Mammary epithelial cell (primary cell): ENCODE measurements at regions of chr5 and their contacts with region 1.

Region 1: GRCh38 chr5:94908889-94909480 is 290.5 kb downstream of the SLF1 start:
- DNase-seq: peak; percentile 18
- H3K4me3 ChIP-seq: no peak overlapping the region
- H3K27ac ChIP-seq: no peak overlapping the region
- H3K4me1 ChIP-seq: no peaks in the 10 kb centered on the region
- H3K27me3 ChIP-seq: no peaks in the 10 kb centered on the region
- CTCF ChIP-seq: peak; percentile 69 to 72

Region 2: DNA sequence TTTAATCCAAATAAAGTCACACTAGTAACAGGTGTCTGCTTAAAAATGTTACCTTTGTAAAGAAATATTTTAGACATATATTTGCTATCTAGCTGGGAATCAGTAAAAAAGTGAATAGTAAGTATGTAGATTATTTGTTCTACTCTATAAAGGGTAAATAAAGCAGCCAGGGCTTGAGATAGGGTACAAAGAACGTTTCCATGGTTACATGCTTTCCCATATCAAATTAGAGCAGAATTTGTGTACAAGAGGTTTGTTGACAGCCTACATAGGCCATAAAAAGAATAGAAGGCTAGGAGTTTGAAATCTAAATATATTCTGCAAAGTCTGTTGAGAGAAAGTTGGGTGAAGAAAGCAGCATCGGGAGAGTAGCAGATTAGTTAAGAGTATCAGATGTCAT is 1006.7 kb before region 1 on chr5:
- CTCF ChIA-PET with region 1: no interaction called
- dilution Hi-C with region 1: no loop called
- in situ Hi-C with region 1: no loop called
- intact Hi-C with region 1: loop called (anchors 5 kb)
- DNase-seq: no peak
- H3K4me3 ChIP-seq: no peak overlapping the region
- H3K27ac ChIP-seq: no peak overlapping the region
- H3K4me1 ChIP-seq: no peaks in the 10 kb centered on the region
- H3K27me3 ChIP-seq: no peaks in the 10 kb centered on the region
- CTCF ChIP-seq: no peak

Region 3: DNA sequence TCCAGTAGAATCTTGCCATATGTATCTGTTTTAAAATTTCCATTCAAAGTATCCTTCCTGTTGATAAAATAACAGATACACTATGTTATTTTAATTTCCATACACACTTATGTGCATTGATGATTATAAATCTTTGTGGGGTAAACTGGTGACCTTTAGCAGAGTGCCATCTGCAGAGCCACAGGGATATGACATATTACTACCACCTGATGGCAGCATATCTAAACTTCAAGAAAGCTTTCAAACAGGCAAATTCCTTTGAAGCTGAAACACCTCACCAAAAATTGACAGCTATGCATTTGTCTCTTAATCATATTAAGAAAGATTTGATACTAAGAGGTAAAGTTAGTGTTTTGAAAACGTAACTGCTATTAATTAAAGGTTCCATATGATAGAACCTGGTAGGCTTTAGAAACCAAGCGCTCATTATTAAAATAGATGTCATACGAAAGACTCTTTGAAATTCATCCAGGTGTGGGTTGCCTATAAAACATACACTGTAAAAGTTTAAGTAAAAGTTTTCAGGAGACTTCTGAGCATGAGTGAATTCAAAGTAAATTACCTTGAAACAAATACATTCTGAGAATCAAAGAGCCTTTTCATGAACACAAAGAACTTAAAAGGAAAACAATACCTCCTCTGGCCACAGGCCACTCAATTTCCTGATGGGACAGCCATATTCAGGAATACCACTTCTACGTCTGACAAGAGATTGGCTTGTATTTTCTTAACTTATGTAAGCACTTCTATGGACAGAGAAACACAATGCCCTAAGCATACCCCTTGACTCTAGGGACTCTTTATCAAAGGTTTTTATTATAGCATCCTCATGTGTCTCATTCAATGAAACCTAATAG is 383.9 kb before region 1 on chr5:
- CTCF ChIA-PET with region 1: no interaction called
- dilution Hi-C with region 1: no loop called
- in situ Hi-C with region 1: no loop called
- intact Hi-C with region 1: loop called (anchors 2 kb)
- DNase-seq: peak; percentile 21
- H3K4me3 ChIP-seq: no peak overlapping the region
- H3K27ac ChIP-seq: no peak overlapping the region
- H3K4me1 ChIP-seq: no peaks in the 10 kb centered on the region
- H3K27me3 ChIP-seq: no peaks in the 10 kb centered on the region
- CTCF ChIP-seq: peak; percentile 51 to 70

Region 4: GRCh38 chr5:94618493-94619328 is 290.3 kb before region 1 on chr5 and contains the starts of genes KIAA0825 and SLF1:
- CTCF ChIA-PET with region 1: no interaction called
- dilution Hi-C with region 1: no loop called
- in situ Hi-C with region 1: no loop called
- intact Hi-C with region 1: loop called (anchors 10 kb)
- DNase-seq: peak; percentile 90
- H3K4me3 ChIP-seq: peak within 1 kb of the TSS; percentile 59 to 94 (median 59)
- H3K27ac ChIP-seq: peak within 1 kb of the TSS; percentile 83
- H3K4me1 ChIP-seq: peaks cover 13% of the 10 kb centered on the region
- H3K27me3 ChIP-seq: no peaks in the 10 kb centered on the region
- CTCF ChIP-seq: no peak
- total RNA-seq, gene KIAA0825: 0.89 to 9.3 TPM
- total RNA-seq, gene SLF1: 4.2 to 8.9 TPM

Region 5: GRCh38 chr5:94731471-94731870 is 177.5 kb before region 1 on chr5:
- CTCF ChIA-PET with region 1: no interaction called
- dilution Hi-C with region 1: no loop called
- in situ Hi-C with region 1: no loop called
- intact Hi-C with region 1: loop called (anchors 10 kb)
- DNase-seq: no peak
- H3K4me3 ChIP-seq: no peak overlapping the region
- H3K27ac ChIP-seq: no peak overlapping the region
- H3K4me1 ChIP-seq: no peaks in the 10 kb centered on the region
- H3K27me3 ChIP-seq: no peaks in the 10 kb centered on the region
- CTCF ChIP-seq: no peak

Region 6: DNA sequence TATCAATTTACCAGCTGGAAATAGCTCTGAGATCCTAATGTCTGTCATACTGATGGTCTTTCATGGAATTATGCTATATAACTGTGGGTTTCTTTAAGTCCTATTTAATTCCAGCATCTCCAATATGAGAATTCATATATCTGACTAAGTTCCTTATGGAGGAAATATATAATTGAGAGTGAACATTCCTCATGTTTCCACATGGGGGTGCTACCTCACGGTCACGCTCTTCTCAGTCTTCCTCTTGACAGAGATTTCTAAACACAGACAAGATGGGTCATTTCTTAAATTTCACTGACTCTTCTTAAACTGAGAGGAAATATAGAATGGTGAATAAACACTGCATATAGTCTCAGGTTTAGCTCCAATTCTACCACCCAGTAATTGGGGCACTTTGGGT is 78.5 kb before region 1 on chr5:
- CTCF ChIA-PET with region 1: no interaction called
- dilution Hi-C with region 1: no loop called
- in situ Hi-C with region 1: no loop called
- intact Hi-C with region 1: loop called (anchors 1 kb)
- DNase-seq: peak; percentile 5
- H3K4me3 ChIP-seq: no peak overlapping the region
- H3K27ac ChIP-seq: no peak overlapping the region
- H3K4me1 ChIP-seq: no peaks in the 10 kb centered on the region
- H3K27me3 ChIP-seq: no peaks in the 10 kb centered on the region
- CTCF ChIP-seq: peak; percentile 42 to 56

Region 7: GRCh38 chr5:95554647-95555548 is 645.9 kb after region 1 on chr5 and contains the starts of genes ARSK and SKIC3:
- CTCF ChIA-PET with region 1: no interaction called
- dilution Hi-C with region 1: no loop called
- in situ Hi-C with region 1: no loop called
- intact Hi-C with region 1: no loop called
- DNase-seq: peak; percentile 99
- H3K4me3 ChIP-seq: peak within 1 kb of the TSS; percentile 72 to 96 (median 86)
- H3K27ac ChIP-seq: peak within 1 kb of the TSS; percentile 87
- H3K4me1 ChIP-seq: peaks cover 5% of the 10 kb centered on the region
- H3K27me3 ChIP-seq: no peaks in the 10 kb centered on the region
- CTCF ChIP-seq: peak; percentile 25 to 56
- total RNA-seq, gene ARSK: 7.6 to 11.2 TPM
- total RNA-seq, gene SKIC3: 83.8 to 123 TPM